ENCODE measurements at regions of chr22 and their contacts with region 1.

Region 1: GRCh38 chr22:24230911-24231656 is 13.8 kb downstream of the GGT5 start:
- DNase-seq: peak; percentile 51 to 98
- H3K4me3 ChIP-seq: no peak overlapping the region
- H3K27ac ChIP-seq: no peak overlapping the region; the same call in 1 of the 2 replicates
- H3K4me1 ChIP-seq: peaks cover 0 to 5% (median 4%) of the 10 kb centered on the region in 4 experiments; a peak in 3 of 7 replicates
- H3K27me3 ChIP-seq: no peaks in the 10 kb centered on the region; a peak in 2 of 7 replicates
- CTCF ChIP-seq: peak; percentile 55 to 81 (median 78)
- EP300 ChIP-seq: no peak
- POLR2A ChIP-seq: no peak
- RAD21 ChIP-seq: peak; percentile 44 to 67; a peak in 3 of 4 replicates

Region 2: DNA sequence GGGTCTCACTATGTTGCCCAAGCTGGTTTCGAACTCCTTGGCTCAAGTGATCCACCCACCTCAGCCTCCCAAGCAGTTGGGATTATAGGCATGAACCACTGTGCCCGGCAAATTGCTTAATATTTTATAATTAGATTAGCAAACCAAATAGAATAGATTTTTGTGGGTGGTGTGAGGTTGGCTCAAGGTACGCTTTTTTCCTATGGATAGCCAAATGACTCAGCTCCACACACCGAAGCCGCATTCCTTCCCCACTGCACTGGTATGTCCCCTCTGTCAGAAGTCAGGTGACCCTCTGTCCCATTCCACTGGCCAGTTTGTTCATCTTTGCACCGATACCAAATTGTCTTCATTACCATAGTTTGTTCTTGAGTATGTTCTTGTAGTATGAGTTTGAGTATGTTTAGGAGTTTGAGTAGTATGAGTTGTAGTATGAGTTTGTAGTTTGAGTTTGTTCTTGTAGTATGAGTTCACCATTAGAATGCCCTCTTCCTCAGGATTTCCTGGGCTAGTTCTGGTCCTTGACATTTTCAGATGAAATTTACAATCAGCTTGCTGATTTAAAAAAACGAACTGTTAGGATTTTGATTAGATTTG is 30.4 kb before region 1 on chr22:
- CTCF ChIA-PET with region 1: interaction called, 43 read pairs
- POLR2A ChIA-PET with region 1: no interaction called
- DNase-seq: no peak
- H3K4me3 ChIP-seq: no peak overlapping the region
- H3K27ac ChIP-seq: no peak overlapping the region
- H3K4me1 ChIP-seq: no peaks in the 10 kb centered on the region
- H3K27me3 ChIP-seq: no peaks in the 10 kb centered on the region
- CTCF ChIP-seq: no peak
- EP300 ChIP-seq: no peak
- POLR2A ChIP-seq: no peak
- RAD21 ChIP-seq: no peak

Region 3: GRCh38 chr22:24208012-24208749 is 22.9 kb before region 1 on chr22:
- CTCF ChIA-PET with region 1: interaction called, 17 read pairs
- POLR2A ChIA-PET with region 1: no interaction called
- DNase-seq: no peak
- H3K4me3 ChIP-seq: no peak overlapping the region
- H3K27ac ChIP-seq: no peak overlapping the region
- H3K4me1 ChIP-seq: peaks cover 0 to 5% (median under 1%) of the 10 kb centered on the region in 4 experiments; a peak in 1 of 7 replicates
- H3K27me3 ChIP-seq: no peaks in the 10 kb centered on the region
- CTCF ChIP-seq: no peak
- EP300 ChIP-seq: no peak
- POLR2A ChIP-seq: no peak
- RAD21 ChIP-seq: no peak

Region 4: DNA sequence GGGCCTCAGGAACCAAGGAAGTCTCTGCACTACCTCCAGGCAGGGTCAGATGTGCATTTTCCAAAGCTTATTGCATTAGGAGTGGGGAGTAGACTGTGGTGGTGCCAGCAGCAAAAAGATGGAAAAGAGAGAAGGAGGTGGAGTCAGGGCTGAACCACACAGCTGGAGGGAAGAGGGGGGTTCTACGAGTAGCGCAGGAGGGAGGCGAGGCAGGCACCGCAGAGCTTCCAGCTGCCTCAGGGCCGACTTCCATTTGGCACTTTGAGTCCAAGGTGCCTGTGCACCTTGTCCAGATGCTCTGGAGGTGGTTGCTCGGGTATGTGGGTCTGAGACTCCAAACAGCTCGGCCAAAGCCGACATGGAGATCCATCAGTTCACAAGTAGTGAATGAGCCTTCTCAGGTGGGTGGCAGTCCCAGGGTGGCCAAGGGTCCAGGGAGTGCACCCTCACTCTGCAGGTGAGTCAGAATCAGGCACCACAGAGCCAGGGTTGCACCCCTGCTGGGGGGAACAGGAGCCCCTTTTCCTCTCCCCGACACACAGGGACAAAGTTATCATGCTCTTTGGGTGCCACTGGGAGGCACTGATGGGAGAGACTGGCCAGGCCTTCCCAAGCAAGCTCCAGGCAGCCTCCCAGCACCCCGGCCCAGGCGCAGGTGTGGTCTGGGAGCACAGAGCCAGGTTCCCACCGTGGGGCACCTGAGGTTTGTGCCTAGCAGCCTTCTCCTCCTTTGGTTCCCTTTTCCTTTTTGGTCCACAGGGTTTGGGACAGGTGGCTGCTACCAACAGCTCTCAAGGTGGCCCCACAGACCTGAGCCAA is 16.4 kb before region 1 on chr22:
- CTCF ChIA-PET with region 1: interaction called, 56 read pairs
- POLR2A ChIA-PET with region 1: no interaction called
- DNase-seq: no peak
- H3K4me3 ChIP-seq: no peak overlapping the region
- H3K27ac ChIP-seq: no peak overlapping the region
- H3K4me1 ChIP-seq: no peaks in the 10 kb centered on the region
- H3K27me3 ChIP-seq: no peaks in the 10 kb centered on the region
- CTCF ChIP-seq: no peak
- EP300 ChIP-seq: no peak
- POLR2A ChIP-seq: no peak
- RAD21 ChIP-seq: no peak

Region 5: GRCh38 chr22:24219750-24220149 is 11.3 kb before region 1 on chr22:
- CTCF ChIA-PET with region 1: interaction called, 56 read pairs
- POLR2A ChIA-PET with region 1: no interaction called
- DNase-seq: no peak
- H3K4me3 ChIP-seq: no peak overlapping the region
- H3K27ac ChIP-seq: no peak overlapping the region
- H3K4me1 ChIP-seq: no peaks in the 10 kb centered on the region
- H3K27me3 ChIP-seq: no peaks in the 10 kb centered on the region
- CTCF ChIP-seq: no peak
- EP300 ChIP-seq: no peak
- POLR2A ChIP-seq: no peak
- RAD21 ChIP-seq: no peak

Region 6: DNA sequence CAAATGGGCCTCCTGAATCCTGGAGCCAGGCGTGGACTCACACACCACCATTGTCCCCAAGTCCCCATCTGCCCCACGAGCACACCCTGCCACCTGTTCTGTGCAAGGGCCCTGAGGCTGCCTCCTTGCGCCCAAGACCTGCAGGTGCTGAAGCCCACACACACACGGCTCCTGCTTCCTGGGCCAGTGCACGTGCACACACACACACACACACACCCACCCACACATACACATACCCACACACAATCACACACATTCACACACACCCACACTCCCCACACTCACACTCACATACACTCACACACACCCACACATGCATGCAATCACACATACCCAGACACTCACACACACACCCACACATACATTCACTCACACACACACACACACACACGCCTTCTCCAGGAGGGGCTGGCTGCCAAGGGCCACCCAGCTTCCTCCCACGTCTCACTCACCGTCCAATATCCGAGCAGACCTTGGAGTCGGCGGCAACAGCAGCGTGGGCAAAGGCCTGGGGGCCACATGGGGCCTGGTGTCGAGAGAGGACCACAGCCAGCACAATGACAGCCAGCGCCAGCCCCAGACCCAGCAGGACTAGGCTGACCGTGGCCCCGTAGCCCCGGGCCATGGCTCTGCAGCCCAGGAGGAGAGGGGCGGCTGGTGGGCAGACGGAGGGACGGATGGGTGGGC is 13.2 kb after region 1 on chr22:
- CTCF ChIA-PET with region 1: interaction called, 44 read pairs
- POLR2A ChIA-PET with region 1: no interaction called
- DNase-seq: no peak
- H3K4me3 ChIP-seq: no peak overlapping the region
- H3K27ac ChIP-seq: no peak overlapping the region
- H3K4me1 ChIP-seq: peaks cover 0 to 3% (median 0%) of the 10 kb centered on the region in 4 experiments; a peak in 2 of 7 replicates
- H3K27me3 ChIP-seq: no peaks in the 10 kb centered on the region; a peak in 1 of 7 replicates
- CTCF ChIP-seq: no peak
- EP300 ChIP-seq: no peak
- POLR2A ChIP-seq: no peak
- RAD21 ChIP-seq: no peak